Ovary (tissue), 10 donors: ENCODE measurements at regions of chr15 and their contacts with region 1.

Region 1: GRCh38 chr15:100526027-100526481 is 2.7 kb downstream of the CERS3 start:
- DNase-seq: peak in 3 of 5 donors; percentile 41 to 67 (median 49)
- H3K4me3 ChIP-seq: no peak overlapping the region
- H3K27ac ChIP-seq: no peak overlapping the region
- H3K4me1 ChIP-seq: no peaks in the 10 kb centered on the region
- H3K27me3 ChIP-seq: no peaks in the 10 kb centered on the region
- CTCF ChIP-seq: no peak
- EP300 ChIP-seq: no peak
- POLR2A ChIP-seq: no peak

Region 2: GRCh38 chr15:100075229-100075628 is 450.8 kb before region 1 on chr15:
- intact Hi-C with region 1: no loop called
- DNase-seq: no peak
- H3K4me3 ChIP-seq: no peak overlapping the region
- H3K27ac ChIP-seq: no peak overlapping the region
- H3K4me1 ChIP-seq: no peaks in the 10 kb centered on the region
- H3K27me3 ChIP-seq: no peaks in the 10 kb centered on the region
- CTCF ChIP-seq: no peak
- EP300 ChIP-seq: no peak
- POLR2A ChIP-seq: no peak

Region 3: GRCh38 chr15:100405179-100405578 is 120.9 kb before region 1 on chr15:
- intact Hi-C with region 1: loop called in 1 of 4 experiments (anchors 10 kb)
- DNase-seq: no peak
- H3K4me3 ChIP-seq: no peak overlapping the region
- H3K27ac ChIP-seq: no peak overlapping the region
- H3K4me1 ChIP-seq: no peaks in the 10 kb centered on the region
- H3K27me3 ChIP-seq: no peaks in the 10 kb centered on the region
- CTCF ChIP-seq: no peak
- EP300 ChIP-seq: no peak
- POLR2A ChIP-seq: no peak